Mammary epithelial cell (primary cell): ENCODE measurements at regions of chr2 and their contacts with region 1.

Region 1: GRCh38 chr2:177164584-177165052 is 48.0 kb upstream of the HNRNPA3 start:
- DNase-seq: peak; percentile 66
- H3K4me3 ChIP-seq: peak overlapping the region; percentile 21 to 30 (median 29)
- H3K27ac ChIP-seq: peak overlapping the region; percentile 69
- H3K4me1 ChIP-seq: peaks cover 36% of the 10 kb centered on the region
- H3K27me3 ChIP-seq: no peaks in the 10 kb centered on the region
- CTCF ChIP-seq: peak; percentile 100

Region 2: DNA sequence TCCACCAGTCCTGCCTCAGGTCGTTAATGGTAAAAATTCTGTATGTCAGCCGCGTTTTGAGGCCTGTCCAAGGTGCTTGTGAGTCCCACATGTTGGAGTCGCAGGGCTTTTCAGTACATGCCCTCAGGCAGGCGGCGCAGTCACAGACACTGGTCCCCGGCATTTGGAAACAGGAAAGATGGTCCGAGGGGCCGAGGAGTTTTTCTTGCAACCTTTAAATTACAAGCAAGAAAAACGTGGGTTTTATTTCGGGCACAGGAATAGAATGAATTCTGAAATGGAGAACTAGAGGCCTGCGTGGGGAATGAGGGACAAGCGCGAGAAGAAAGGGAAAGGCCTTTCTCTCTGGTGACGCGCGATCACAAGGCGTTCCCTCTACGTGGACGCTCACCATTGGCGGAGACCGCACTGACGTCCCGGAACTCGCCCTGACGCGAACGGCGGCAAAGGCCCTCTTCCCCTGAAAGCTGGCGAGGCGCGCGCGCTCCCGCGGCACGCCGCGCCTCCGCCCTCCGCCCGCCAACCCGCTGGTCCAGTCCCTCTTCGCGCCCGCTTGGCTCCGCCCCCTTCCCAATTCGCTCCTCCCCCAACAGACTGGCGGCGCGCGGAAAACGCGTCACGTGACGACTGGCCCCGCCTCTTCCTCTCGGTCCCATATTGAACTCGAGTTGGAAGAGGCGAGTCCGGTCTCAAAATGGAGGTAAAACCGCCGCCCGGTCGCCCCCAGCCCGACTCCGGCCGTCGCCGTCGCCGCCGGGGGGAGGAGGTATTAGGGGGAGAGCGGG is 47.7 kb after region 1 on chr2 and contains the start of gene HNRNPA3:
- CTCF ChIA-PET with region 1: interaction called, 3 read pairs
- dilution Hi-C with region 1: loop called (anchors 10 kb)
- in situ Hi-C with region 1: no loop called
- intact Hi-C with region 1: loop called (anchors 1 kb)
- DNase-seq: peak; percentile 99
- H3K4me3 ChIP-seq: peak within 1 kb of the TSS; percentile 81 to 100 (median 97)
- H3K27ac ChIP-seq: peak within 1 kb of the TSS; percentile 99
- H3K4me1 ChIP-seq: peaks cover 20% of the 10 kb centered on the region
- H3K27me3 ChIP-seq: no peaks in the 10 kb centered on the region
- CTCF ChIP-seq: peak in 1 of 2 donors; percentile 18
- total RNA-seq, gene HNRNPA3: 18.2 to 196 TPM

Region 3: GRCh38 chr2:177263451-177264208 is 99.0 kb after region 1 on chr2:
- CTCF ChIA-PET with region 1: interaction called, 3 read pairs
- dilution Hi-C with region 1: loop called (anchors 10 kb)
- in situ Hi-C with region 1: loop called in 1 of 2 experiments (anchors 10 kb)
- intact Hi-C with region 1: loop called (anchors 1 kb)
- DNase-seq: peak; percentile 99
- H3K4me3 ChIP-seq: peak overlapping the region; percentile 86 to 100 (median 95)
- H3K27ac ChIP-seq: peak overlapping the region; percentile 91
- H3K4me1 ChIP-seq: peaks cover 28% of the 10 kb centered on the region
- H3K27me3 ChIP-seq: no peaks in the 10 kb centered on the region
- CTCF ChIP-seq: peak; percentile 61 to 92

Region 4: DNA sequence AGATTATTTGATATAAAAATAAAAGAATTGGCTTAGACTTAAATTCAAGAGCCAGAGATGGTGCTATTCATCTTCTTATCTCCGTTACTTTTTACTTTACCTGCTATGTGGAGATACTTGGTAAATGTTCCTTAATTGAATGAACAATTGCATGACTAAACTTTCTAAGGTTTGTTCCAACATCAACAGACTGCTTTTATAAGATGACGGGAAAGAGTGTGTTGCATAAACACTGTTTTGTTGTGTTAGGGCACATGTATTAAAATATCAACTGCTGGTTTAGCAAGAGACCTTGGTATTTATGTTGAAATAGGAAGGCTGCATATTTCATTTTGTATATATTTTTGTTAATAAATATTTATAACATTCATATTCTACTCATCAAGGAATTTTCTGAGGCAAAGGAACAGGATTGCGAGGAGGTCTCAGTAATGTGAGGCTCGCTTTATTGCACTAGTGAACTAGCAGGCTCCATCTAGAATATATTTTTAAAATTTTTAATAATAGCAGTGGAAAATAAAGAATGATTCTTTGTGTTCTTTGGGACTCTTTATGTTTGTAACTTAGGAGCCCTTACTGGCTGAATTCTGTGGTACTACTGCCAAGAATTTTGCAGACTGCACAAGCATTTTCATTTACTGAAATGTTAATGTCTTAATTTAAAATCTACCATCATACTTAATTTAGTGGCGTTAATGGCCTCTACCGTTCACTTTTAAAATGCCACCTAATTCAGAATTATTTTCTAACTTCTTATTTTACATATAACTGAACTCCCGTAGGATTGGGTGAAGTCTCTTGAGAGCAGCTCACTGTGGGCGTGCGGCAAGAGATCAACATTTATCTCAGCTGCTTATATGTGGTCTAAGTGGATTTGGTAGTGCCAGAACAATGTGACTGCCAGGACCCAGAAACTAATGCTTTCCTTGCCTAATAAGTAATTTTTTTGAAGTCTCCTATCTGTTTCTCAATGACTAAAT is 110.7 kb after region 1 on chr2:
- CTCF ChIA-PET with region 1: no interaction called
- dilution Hi-C with region 1: no loop called
- in situ Hi-C with region 1: no loop called
- intact Hi-C with region 1: no loop called
- DNase-seq: peak; percentile 87
- H3K4me3 ChIP-seq: peak overlapping the region in 1 of 3 experiments; percentile 36
- H3K27ac ChIP-seq: peak overlapping the region; percentile 36
- H3K4me1 ChIP-seq: peaks cover 10% of the 10 kb centered on the region
- H3K27me3 ChIP-seq: no peaks in the 10 kb centered on the region
- CTCF ChIP-seq: no peak

Region 5: GRCh38 chr2:177332041-177332991 is 167.7 kb after region 1 on chr2:
- CTCF ChIA-PET with region 1: interaction called, 5 read pairs
- dilution Hi-C with region 1: loop called (anchors 5 kb)
- in situ Hi-C with region 1: no loop called
- intact Hi-C with region 1: loop called (anchors 1 kb)
- DNase-seq: peak; percentile 60
- H3K4me3 ChIP-seq: no peak overlapping the region
- H3K27ac ChIP-seq: no peak overlapping the region
- H3K4me1 ChIP-seq: peaks cover 10% of the 10 kb centered on the region
- H3K27me3 ChIP-seq: no peaks in the 10 kb centered on the region
- CTCF ChIP-seq: peak; percentile 59 to 67

Region 6: GRCh38 chr2:177604271-177605065 is 439.9 kb after region 1 on chr2:
- CTCF ChIA-PET with region 1: no interaction called
- dilution Hi-C with region 1: no loop called
- in situ Hi-C with region 1: loop called in 1 of 2 experiments (anchors 25 kb)
- intact Hi-C with region 1: loop called (anchors 2 kb)
- DNase-seq: peak; percentile 23
- H3K4me3 ChIP-seq: no peak overlapping the region
- H3K27ac ChIP-seq: no peak overlapping the region
- H3K4me1 ChIP-seq: no peaks in the 10 kb centered on the region
- H3K27me3 ChIP-seq: no peaks in the 10 kb centered on the region
- CTCF ChIP-seq: peak; percentile 62 to 76

Region 7: GRCh38 chr2:177763532-177764265 is 599.1 kb after region 1 on chr2:
- CTCF ChIA-PET with region 1: interaction called, 3 read pairs
- dilution Hi-C with region 1: no loop called
- in situ Hi-C with region 1: loop called in 1 of 2 experiments (anchors 25 kb)
- intact Hi-C with region 1: loop called (anchors 2 kb)
- DNase-seq: peak; percentile 35
- H3K4me3 ChIP-seq: no peak overlapping the region
- H3K27ac ChIP-seq: no peak overlapping the region
- H3K4me1 ChIP-seq: no peaks in the 10 kb centered on the region
- H3K27me3 ChIP-seq: peaks cover 2% of the 10 kb centered on the region
- CTCF ChIP-seq: peak; percentile 69 to 89